PC-9 (cell line): ENCODE measurements at regions of chr1 and their contacts with region 1.

Region 1: GRCh38 chr1:167687919-167688519 is 33.8 kb upstream of the MPZL1 start:
- DNase-seq: peak; percentile 63
- H3K4me3 ChIP-seq: no peak overlapping the region
- H3K27ac ChIP-seq: no peak overlapping the region
- H3K4me1 ChIP-seq: peaks cover 13% of the 10 kb centered on the region
- H3K27me3 ChIP-seq: no peaks in the 10 kb centered on the region
- CTCF ChIP-seq: peak; percentile 95

Region 2: DNA sequence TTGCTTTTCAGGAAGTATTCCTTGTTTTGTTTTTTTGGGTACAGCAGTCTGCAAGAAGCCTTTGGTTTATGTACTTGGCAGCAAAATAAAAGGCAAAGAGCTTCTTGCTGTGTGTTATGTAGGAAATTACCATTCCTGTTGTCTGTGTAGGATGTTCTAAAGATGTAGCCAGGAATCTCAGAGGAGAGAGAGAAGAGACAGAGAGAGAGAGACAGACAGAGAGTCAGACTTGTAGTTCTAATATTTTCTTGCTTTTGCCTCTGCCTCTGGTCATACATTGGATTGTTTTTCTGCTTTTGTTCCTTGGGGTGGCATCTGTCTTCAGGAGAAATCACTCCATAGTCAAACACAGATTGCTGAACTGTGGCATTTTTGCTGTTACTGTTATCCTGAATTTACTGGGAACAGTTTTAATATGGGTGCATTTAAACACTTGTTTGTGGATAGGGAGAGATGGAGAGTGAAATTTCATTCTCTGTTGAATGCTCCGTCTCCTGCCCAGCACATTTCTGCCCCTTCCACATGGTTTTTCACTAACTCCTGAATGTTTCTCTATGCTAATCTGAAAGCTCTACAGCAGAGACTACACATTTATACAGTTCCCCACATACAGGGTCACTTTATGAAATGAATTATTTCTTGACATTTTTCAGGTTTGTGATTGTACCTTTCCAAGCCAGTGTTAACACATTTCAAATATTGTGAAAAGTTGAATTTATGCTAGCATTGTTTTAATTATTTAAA is 417.5 kb before region 1 on chr1:
- CTCF ChIA-PET with region 1: no interaction called
- POLR2A ChIA-PET with region 1: no interaction called
- intact Hi-C with region 1: loop called (anchors 5 kb)
- DNase-seq: no peak
- H3K4me3 ChIP-seq: no peak overlapping the region
- H3K27ac ChIP-seq: no peak overlapping the region
- H3K4me1 ChIP-seq: no peaks in the 10 kb centered on the region
- H3K27me3 ChIP-seq: no peaks in the 10 kb centered on the region
- CTCF ChIP-seq: no peak

Region 3: DNA sequence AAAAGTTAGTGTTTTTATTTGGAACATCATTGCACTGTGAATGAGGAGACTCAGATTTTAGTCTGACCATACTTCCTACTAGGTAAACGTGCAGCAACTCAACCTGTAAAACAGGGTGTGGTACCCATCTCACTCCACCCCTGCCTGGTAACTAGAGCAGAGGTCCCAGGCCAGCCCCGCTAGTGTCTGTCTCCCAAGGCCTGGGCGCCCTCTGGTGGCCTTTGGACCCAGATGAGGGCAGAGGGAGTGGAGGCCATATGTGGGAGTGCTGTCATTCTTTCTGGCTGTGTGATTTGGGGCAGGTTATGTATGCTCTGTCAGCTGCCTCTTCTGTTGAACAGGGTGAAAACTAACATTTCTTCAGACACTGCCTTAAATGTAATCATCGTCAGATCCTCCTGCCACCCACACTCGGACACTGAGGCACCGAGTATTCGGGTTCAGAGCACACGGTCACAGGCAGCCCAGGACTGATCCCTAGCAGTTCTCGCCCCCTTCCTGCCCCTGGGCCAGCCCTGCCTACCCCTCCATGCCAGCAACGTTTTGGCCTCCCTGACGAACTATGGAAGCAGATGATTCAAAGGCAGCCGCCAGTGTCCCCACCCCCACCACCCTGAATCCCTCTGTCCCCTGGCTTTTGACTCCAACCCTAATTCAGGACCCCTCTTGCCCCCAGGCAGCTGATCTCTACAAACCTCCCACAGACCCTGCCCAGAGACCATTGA is 245.7 kb before region 1 on chr1:
- CTCF ChIA-PET with region 1: no interaction called
- POLR2A ChIA-PET with region 1: no interaction called
- intact Hi-C with region 1: loop called (anchors 2 kb)
- DNase-seq: peak; percentile 92
- H3K4me3 ChIP-seq: 0 out of 2 replicates have a peak overlapping the region, but pooled peaks have one; percentile 3
- H3K27ac ChIP-seq: peak overlapping the region; percentile 52
- H3K4me1 ChIP-seq: peaks cover 21% of the 10 kb centered on the region
- H3K27me3 ChIP-seq: no peaks in the 10 kb centered on the region
- CTCF ChIP-seq: peak; percentile 91

Region 4: GRCh38 chr1:167599957-167600581 is 88.0 kb before region 1 on chr1:
- CTCF ChIA-PET with region 1: interaction called, 5 read pairs
- POLR2A ChIA-PET with region 1: no interaction called
- intact Hi-C with region 1: loop called (anchors 1 kb)
- DNase-seq: peak; percentile 23 to 64
- H3K4me3 ChIP-seq: no peak overlapping the region
- H3K27ac ChIP-seq: no peak overlapping the region
- H3K4me1 ChIP-seq: peaks cover 28% of the 10 kb centered on the region
- H3K27me3 ChIP-seq: peaks cover 7% of the 10 kb centered on the region; the same call in 1 of the 2 replicates
- CTCF ChIP-seq: peak; percentile 33; the same call in 1 of the 2 replicates

Region 5: GRCh38 chr1:167663002-167663772 is 24.8 kb before region 1 on chr1:
- CTCF ChIA-PET with region 1: no interaction called
- POLR2A ChIA-PET with region 1: no interaction called
- intact Hi-C with region 1: no loop called
- DNase-seq: peak in 1 of 2 experiments; percentile 47
- H3K4me3 ChIP-seq: no peak overlapping the region
- H3K27ac ChIP-seq: no peak overlapping the region
- H3K4me1 ChIP-seq: peaks cover 19% of the 10 kb centered on the region; the same call in 1 of the 2 replicates
- H3K27me3 ChIP-seq: no peaks in the 10 kb centered on the region
- CTCF ChIP-seq: no peak

Region 6: GRCh38 chr1:167752219-167752985 is 64.4 kb after region 1 on chr1:
- CTCF ChIA-PET with region 1: no interaction called
- POLR2A ChIA-PET with region 1: no interaction called
- intact Hi-C with region 1: no loop called
- DNase-seq: no peak
- H3K4me3 ChIP-seq: no peak overlapping the region
- H3K27ac ChIP-seq: no peak overlapping the region
- H3K4me1 ChIP-seq: peaks cover 6% of the 10 kb centered on the region; the same call in 1 of the 2 replicates
- H3K27me3 ChIP-seq: no peaks in the 10 kb centered on the region
- CTCF ChIP-seq: no peak